ENCODE measurements at regions of chr2 and their contacts with region 1.

Region 1: GRCh38 chr2:68751397-68752339 is 17.1 kb downstream of the ARHGAP25 start:
- DNase-seq: peak; percentile 86
- ATAC-seq: peak; percentile 99
- H3K4me3 ChIP-seq: no peak overlapping the region
- H3K27ac ChIP-seq: no peak overlapping the region
- H3K4me1 ChIP-seq: no peaks in the 10 kb centered on the region
- H3K27me3 ChIP-seq: no peaks in the 10 kb centered on the region
- CTCF ChIP-seq: peak; percentile 90 to 93 (median 90)
- POLR2A ChIP-seq: no peak
- RAD21 ChIP-seq: peak; percentile 82

Region 2: GRCh38 chr2:68709421-68709911 is 42.2 kb before region 1 on chr2:
- CTCF ChIA-PET with region 1: interaction called, 13 read pairs
- POLR2A ChIA-PET with region 1: no interaction called
- RAD21 ChIA-PET with region 1: interaction called in 1 of 2 experiments, 3 read pairs
- intact Hi-C with region 1: no loop called
- DNase-seq: peak; percentile 45
- ATAC-seq: peak; percentile 98
- H3K4me3 ChIP-seq: no peak overlapping the region
- H3K27ac ChIP-seq: no peak overlapping the region
- H3K4me1 ChIP-seq: no peaks in the 10 kb centered on the region
- H3K27me3 ChIP-seq: no peaks in the 10 kb centered on the region
- CTCF ChIP-seq: peak; percentile 63 to 78 (median 77)
- POLR2A ChIP-seq: no peak
- RAD21 ChIP-seq: peak; percentile 77

Region 3: GRCh38 chr2:68721482-68722101 is 30.1 kb before region 1 on chr2:
- CTCF ChIA-PET with region 1: interaction called, 19 read pairs
- POLR2A ChIA-PET with region 1: no interaction called
- RAD21 ChIA-PET with region 1: no interaction called
- intact Hi-C with region 1: no loop called
- DNase-seq: peak; percentile 68
- ATAC-seq: peak; percentile 92
- H3K4me3 ChIP-seq: peak overlapping the region in 1 of 2 experiments; percentile 27; a peak in 3 of 4 replicates
- H3K27ac ChIP-seq: peak overlapping the region; percentile 18; the same call in 1 of the 2 replicates
- H3K4me1 ChIP-seq: peaks cover 15 to 20% of the 10 kb centered on the region in 2 experiments
- H3K27me3 ChIP-seq: peaks cover 26% of the 10 kb centered on the region
- CTCF ChIP-seq: no peak
- POLR2A ChIP-seq: no peak
- RAD21 ChIP-seq: no peak

Region 4: DNA sequence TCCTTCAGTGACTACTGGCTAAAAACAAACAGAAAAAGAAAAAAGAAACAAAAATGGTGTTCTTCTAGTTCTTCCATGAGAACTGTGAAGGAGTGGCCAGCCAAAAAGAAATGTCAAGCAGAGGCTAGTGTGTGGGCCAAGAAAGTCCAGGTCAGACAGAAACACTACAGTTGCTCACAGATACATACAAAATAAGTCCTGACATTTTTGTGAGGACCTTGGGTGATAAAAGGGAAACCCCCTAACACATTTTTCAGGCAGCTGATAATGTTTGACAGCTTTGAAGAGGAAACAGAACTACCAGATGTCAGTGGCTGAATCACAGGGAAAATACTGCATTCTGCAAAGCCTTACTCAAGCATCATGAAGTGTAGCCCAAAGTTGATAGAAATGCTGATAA is 11.0 kb after region 1 on chr2:
- CTCF ChIA-PET with region 1: interaction called, 24 read pairs
- POLR2A ChIA-PET with region 1: no interaction called
- RAD21 ChIA-PET with region 1: no interaction called
- intact Hi-C with region 1: no loop called
- DNase-seq: no peak
- ATAC-seq: no peak
- H3K4me3 ChIP-seq: no peak overlapping the region
- H3K27ac ChIP-seq: no peak overlapping the region
- H3K4me1 ChIP-seq: no peaks in the 10 kb centered on the region
- H3K27me3 ChIP-seq: no peaks in the 10 kb centered on the region
- CTCF ChIP-seq: no peak
- POLR2A ChIP-seq: no peak
- RAD21 ChIP-seq: no peak

Region 5: DNA sequence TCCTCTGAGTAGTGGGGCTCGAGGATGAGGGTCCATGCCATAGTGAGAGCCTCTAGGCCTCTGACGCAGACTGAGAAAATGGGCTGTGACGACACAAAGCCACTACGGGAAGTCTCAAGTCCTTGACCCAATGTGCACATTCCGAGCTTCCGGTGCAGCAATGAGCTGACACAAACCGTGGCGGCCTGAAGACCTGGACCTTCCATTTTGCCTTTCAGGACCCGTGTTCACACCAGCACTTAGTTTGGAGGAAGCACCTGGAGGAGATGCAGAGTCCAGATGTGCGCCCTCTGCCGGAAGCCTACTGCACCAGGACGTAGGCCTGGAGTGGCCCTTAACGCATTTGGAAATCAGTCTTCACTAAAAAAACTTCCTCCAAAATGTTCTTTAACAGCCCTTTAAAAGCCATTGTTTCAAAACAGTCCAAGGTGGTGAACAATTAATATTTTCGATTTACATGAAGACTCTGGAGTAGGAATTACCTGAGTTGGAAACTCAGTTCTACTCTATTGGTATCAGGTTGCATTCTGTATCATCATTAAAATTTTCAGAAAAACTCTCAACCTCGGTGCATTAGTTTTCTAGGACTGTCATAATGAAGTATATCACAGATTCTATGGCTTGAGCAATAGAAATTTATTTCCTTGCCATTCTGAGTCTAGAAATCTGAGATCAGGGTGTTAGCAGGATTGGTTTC is 85.6 kb after region 1 on chr2:
- CTCF ChIA-PET with region 1: interaction called, 13 read pairs
- POLR2A ChIA-PET with region 1: no interaction called
- RAD21 ChIA-PET with region 1: no interaction called
- intact Hi-C with region 1: loop called (anchors 1 kb)
- DNase-seq: peak; percentile 58
- ATAC-seq: peak; percentile 98
- H3K4me3 ChIP-seq: no peak overlapping the region
- H3K27ac ChIP-seq: no peak overlapping the region
- H3K4me1 ChIP-seq: peaks cover 0 to 5% of the 10 kb centered on the region in 2 experiments; a peak in 1 of 4 replicates
- H3K27me3 ChIP-seq: no peaks in the 10 kb centered on the region
- CTCF ChIP-seq: peak; percentile 75 to 94 (median 89)
- POLR2A ChIP-seq: no peak
- RAD21 ChIP-seq: peak; percentile 57

Region 6: GRCh38 chr2:68909793-68910674 is 158.4 kb after region 1 on chr2:
- CTCF ChIA-PET with region 1: interaction called, 30 read pairs
- POLR2A ChIA-PET with region 1: no interaction called
- RAD21 ChIA-PET with region 1: interaction called in 1 of 2 experiments, 5 read pairs
- intact Hi-C with region 1: loop called (anchors 5 kb)
- DNase-seq: peak; percentile 73
- ATAC-seq: peak; percentile 57
- H3K4me3 ChIP-seq: no peak overlapping the region
- H3K27ac ChIP-seq: no peak overlapping the region
- H3K4me1 ChIP-seq: peaks cover 20 to 23% of the 10 kb centered on the region in 2 experiments
- H3K27me3 ChIP-seq: no peaks in the 10 kb centered on the region
- CTCF ChIP-seq: peak; percentile 82 to 87 (median 83)
- POLR2A ChIP-seq: no peak
- RAD21 ChIP-seq: peak; percentile 85

Region 7: DNA sequence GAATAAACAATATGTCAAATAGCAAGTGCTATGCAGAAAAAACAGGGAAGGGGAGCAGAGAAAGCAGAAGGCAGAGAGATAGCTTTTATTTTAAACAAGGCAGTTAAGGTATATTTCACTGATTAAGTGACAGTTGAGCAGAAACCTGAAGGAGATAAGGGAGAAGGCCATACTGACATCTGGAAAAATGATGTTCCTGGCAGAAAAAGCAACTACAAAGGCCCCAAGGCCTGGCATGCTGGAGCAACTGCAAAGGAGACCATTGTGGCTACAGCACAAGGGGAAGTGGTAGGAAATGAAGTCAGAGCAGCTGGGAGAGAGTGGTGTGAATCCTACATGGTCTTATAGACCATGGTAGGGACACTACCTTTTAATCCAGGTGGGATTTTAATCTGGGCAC is 1326.7 kb after region 1 on chr2:
- CTCF ChIA-PET with region 1: no interaction called
- POLR2A ChIA-PET with region 1: no interaction called
- RAD21 ChIA-PET with region 1: no interaction called
- intact Hi-C with region 1: no loop called
- DNase-seq: no peak
- ATAC-seq: no peak
- H3K4me3 ChIP-seq: no peak overlapping the region
- H3K27ac ChIP-seq: no peak overlapping the region
- H3K4me1 ChIP-seq: peaks cover 12 to 20% of the 10 kb centered on the region in 2 experiments
- H3K27me3 ChIP-seq: no peaks in the 10 kb centered on the region
- CTCF ChIP-seq: no peak
- POLR2A ChIP-seq: no peak
- RAD21 ChIP-seq: no peak

Measured in HCT116 (cell line).